CD8-positive, alpha-beta T cell (primary cell): ENCODE measurements at regions of chr3 and their contacts with region 1.

Region 1: GRCh38 chr3:53791317-53791716 is 54.9 kb downstream of the CHDH start:
- DNase-seq: no peak
- ATAC-seq: no peak
- H3K4me3 ChIP-seq: no peak overlapping the region
- H3K4me3 Mint-ChIP-seq: no peak overlapping the region
- H3K27ac ChIP-seq: no peak overlapping the region
- H3K27ac Mint-ChIP-seq: no peak overlapping the region
- H3K4me1 ChIP-seq: no peaks in the 10 kb centered on the region
- H3K4me1 Mint-ChIP-seq: no peaks in the 10 kb centered on the region
- H3K27me3 ChIP-seq: no peaks in the 10 kb centered on the region
- H3K27me3 Mint-ChIP-seq: peaks cover 8% of the 10 kb centered on the region
- CTCF ChIP-seq: no peak

Region 2: DNA sequence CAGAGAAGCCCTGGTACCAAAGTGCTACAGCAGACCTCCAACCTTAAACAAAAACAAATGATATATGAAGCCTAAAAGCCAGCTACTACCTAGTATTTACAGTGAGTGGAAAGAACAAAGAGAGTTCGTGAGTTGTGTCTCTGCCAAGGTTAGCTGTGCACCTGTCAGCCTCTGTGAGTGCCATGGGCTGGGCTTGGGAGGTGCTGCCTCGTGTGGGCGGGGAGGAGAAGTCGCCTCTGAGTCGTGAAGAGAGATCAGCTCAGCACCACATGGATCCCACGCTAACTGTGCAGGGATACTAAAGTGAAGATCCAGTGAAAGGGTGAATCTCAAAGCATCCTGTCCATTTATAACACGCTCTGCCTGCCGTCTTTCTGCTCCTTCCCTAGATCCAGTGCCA is 47.0 kb before region 1 on chr3:
- CTCF ChIA-PET with region 1: no interaction called
- POLR2A ChIA-PET with region 1: no interaction called
- intact Hi-C with region 1: loop called in 1 of 2 experiments (anchors 2 kb)
- DNase-seq: no peak
- ATAC-seq: no peak
- H3K4me3 ChIP-seq: no peak overlapping the region
- H3K4me3 Mint-ChIP-seq: no peak overlapping the region
- H3K27ac ChIP-seq: no peak overlapping the region
- H3K27ac Mint-ChIP-seq: no peak overlapping the region
- H3K4me1 ChIP-seq: no peaks in the 10 kb centered on the region
- H3K4me1 Mint-ChIP-seq: peaks cover 2% of the 10 kb centered on the region
- H3K27me3 ChIP-seq: no peaks in the 10 kb centered on the region
- H3K27me3 Mint-ChIP-seq: peaks cover 5% of the 10 kb centered on the region
- CTCF ChIP-seq: no peak

Region 3: GRCh38 chr3:53758846-53759245 is 32.5 kb before region 1 on chr3:
- CTCF ChIA-PET with region 1: no interaction called
- POLR2A ChIA-PET with region 1: no interaction called
- intact Hi-C with region 1: no loop called
- DNase-seq: no peak
- ATAC-seq: no peak
- H3K4me3 ChIP-seq: no peak overlapping the region
- H3K4me3 Mint-ChIP-seq: no peak overlapping the region
- H3K27ac ChIP-seq: no peak overlapping the region
- H3K27ac Mint-ChIP-seq: no peak overlapping the region
- H3K4me1 ChIP-seq: no peaks in the 10 kb centered on the region
- H3K4me1 Mint-ChIP-seq: peaks cover 11% of the 10 kb centered on the region
- H3K27me3 ChIP-seq: no peaks in the 10 kb centered on the region
- H3K27me3 Mint-ChIP-seq: peaks cover 4% of the 10 kb centered on the region
- CTCF ChIP-seq: no peak

Region 4: GRCh38 chr3:53821631-53822121 is 30.4 kb after region 1 on chr3:
- CTCF ChIA-PET with region 1: no interaction called
- POLR2A ChIA-PET with region 1: no interaction called
- intact Hi-C with region 1: no loop called
- DNase-seq: no peak
- ATAC-seq: no peak
- H3K4me3 ChIP-seq: no peak overlapping the region
- H3K4me3 Mint-ChIP-seq: no peak overlapping the region
- H3K27ac ChIP-seq: no peak overlapping the region
- H3K27ac Mint-ChIP-seq: no peak overlapping the region
- H3K4me1 ChIP-seq: no peaks in the 10 kb centered on the region
- H3K4me1 Mint-ChIP-seq: no peaks in the 10 kb centered on the region
- H3K27me3 ChIP-seq: no peaks in the 10 kb centered on the region
- H3K27me3 Mint-ChIP-seq: peaks cover 2% of the 10 kb centered on the region
- CTCF ChIP-seq: no peak

Region 5: DNA sequence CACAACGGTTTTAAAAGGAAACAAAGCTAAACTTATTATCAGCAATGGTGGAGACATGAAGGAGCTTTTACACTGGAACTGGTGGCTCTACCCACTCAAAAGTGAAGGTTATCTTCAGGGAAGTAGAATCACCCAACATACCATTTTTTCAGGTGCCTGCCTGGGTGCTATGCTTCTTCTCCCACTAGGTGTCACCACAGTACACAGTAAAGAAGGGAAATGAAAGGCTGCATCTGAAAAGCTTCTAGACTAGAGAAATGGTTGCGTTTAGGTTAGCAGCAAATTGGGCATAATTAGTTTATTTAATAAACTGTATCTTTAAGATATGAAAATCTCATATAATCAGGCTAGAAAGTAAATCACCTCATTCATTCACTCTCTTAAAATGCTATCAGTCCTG is 147.3 kb after region 1 on chr3:
- CTCF ChIA-PET with region 1: no interaction called
- POLR2A ChIA-PET with region 1: no interaction called
- intact Hi-C with region 1: no loop called
- DNase-seq: peak in 7 of 9 experiments; percentile 3 to 51 (median 20)
- ATAC-seq: peak; percentile 44
- H3K4me3 ChIP-seq: no peak overlapping the region
- H3K4me3 Mint-ChIP-seq: no peak overlapping the region
- H3K27ac ChIP-seq: no peak overlapping the region
- H3K27ac Mint-ChIP-seq: no peak overlapping the region
- H3K4me1 ChIP-seq: no peaks in the 10 kb centered on the region
- H3K4me1 Mint-ChIP-seq: no peaks in the 10 kb centered on the region
- H3K27me3 ChIP-seq: peaks cover 0 to 5% of the 10 kb centered on the region in 2 experiments
- H3K27me3 Mint-ChIP-seq: peaks cover 58% of the 10 kb centered on the region
- CTCF ChIP-seq: peak; percentile 71

Region 6: DNA sequence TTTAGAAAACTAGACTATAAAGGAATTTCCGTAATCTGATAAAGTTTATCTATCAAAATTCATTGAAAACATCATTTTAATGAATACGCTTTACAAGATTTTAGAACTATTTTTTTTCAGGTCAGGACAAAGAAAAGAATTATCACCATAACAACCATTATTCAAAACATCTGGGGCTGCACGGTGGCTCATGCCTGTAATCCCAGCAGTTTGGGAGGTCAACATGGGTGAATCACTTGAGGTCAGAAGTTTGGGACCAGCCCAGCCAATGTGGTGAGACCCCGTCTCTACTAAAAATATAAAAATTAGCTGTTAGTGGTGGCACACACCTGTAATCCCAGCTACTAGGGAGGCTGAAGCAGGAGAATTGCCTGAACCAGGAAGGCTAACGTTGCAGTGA is 1435.4 kb after region 1 on chr3:
- CTCF ChIA-PET with region 1: no interaction called
- POLR2A ChIA-PET with region 1: no interaction called
- intact Hi-C with region 1: no loop called
- DNase-seq: no peak
- ATAC-seq: no peak
- H3K4me3 ChIP-seq: no peak overlapping the region
- H3K4me3 Mint-ChIP-seq: no peak overlapping the region
- H3K27ac ChIP-seq: no peak overlapping the region
- H3K27ac Mint-ChIP-seq: no peak overlapping the region
- H3K4me1 ChIP-seq: no peaks in the 10 kb centered on the region
- H3K4me1 Mint-ChIP-seq: no peaks in the 10 kb centered on the region
- H3K27me3 ChIP-seq: no peaks in the 10 kb centered on the region
- H3K27me3 Mint-ChIP-seq: no peaks in the 10 kb centered on the region
- CTCF ChIP-seq: no peak